Psoas muscle (tissue), 8 donors: ENCODE measurements at regions of chr4 and their contacts with region 1.

Region 1: DNA sequence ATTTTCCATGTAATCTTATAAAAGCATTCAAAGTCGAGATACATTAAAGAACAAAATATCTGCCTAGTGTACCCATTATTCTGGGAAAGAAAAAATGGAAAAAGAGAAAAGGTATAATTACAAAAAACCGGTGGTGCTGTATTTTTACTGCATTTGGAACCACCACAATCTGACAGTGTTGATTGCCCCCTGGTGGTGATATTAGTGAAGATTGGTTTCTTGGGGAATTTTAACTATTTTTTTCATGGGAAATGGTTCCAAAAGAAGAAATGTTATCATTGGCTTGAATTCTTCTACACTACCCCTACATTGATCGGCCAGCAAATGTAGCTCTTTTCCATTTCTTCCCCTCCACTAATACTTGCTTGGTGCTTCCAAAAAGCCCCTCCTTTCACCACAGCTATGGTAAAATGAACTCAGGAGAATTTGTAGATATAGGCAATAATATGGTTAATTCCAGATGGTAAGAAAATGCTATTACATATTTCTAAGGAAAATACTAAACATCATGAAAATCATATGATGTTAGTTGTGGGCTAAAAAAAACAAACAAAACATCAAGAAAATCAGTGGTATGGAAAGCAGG is 50.0 kb downstream of the COX18 start:
- DNase-seq: no peak
- ATAC-seq: no peak
- H3K4me3 ChIP-seq: no peak overlapping the region
- H3K27ac ChIP-seq: no peak overlapping the region
- H3K4me1 ChIP-seq: no peaks in the 10 kb centered on the region
- H3K27me3 ChIP-seq: peaks cover 0 to under 1% (median 0%) of the 10 kb centered on the region in 3 donors
- CTCF ChIP-seq: peak; percentile 62

Region 2: GRCh38 chr4:72326692-72327632 is 692.6 kb before region 1 on chr4:
- intact Hi-C with region 1: loop called in 1 of 2 experiments (anchors 10 kb)
- DNase-seq: no peak
- ATAC-seq: no peak
- H3K4me3 ChIP-seq: no peak overlapping the region
- H3K27ac ChIP-seq: no peak overlapping the region
- H3K4me1 ChIP-seq: no peaks in the 10 kb centered on the region
- H3K27me3 ChIP-seq: peaks cover 0 to 2% (median 0%) of the 10 kb centered on the region in 3 donors
- CTCF ChIP-seq: peak; percentile 56

Region 3: GRCh38 chr4:72505314-72505744 is 514.2 kb before region 1 on chr4:
- intact Hi-C with region 1: loop called (anchors 10 kb)
- DNase-seq: no peak
- ATAC-seq: peak in 3 of 4 donors; percentile 32 to 61 (median 53)
- H3K4me3 ChIP-seq: no peak overlapping the region
- H3K27ac ChIP-seq: no peak overlapping the region
- H3K4me1 ChIP-seq: no peaks in the 10 kb centered on the region
- H3K27me3 ChIP-seq: no peaks in the 10 kb centered on the region
- CTCF ChIP-seq: peak; percentile 43

Region 4: GRCh38 chr4:72701987-72702819 is 317.4 kb before region 1 on chr4:
- intact Hi-C with region 1: loop called in 1 of 2 experiments (anchors 5 kb)
- DNase-seq: no peak
- ATAC-seq: peak in 2 of 4 donors; percentile 43 to 52
- H3K4me3 ChIP-seq: peak overlapping the region; percentile 58
- H3K27ac ChIP-seq: no peak overlapping the region
- H3K4me1 ChIP-seq: no peaks in the 10 kb centered on the region
- H3K27me3 ChIP-seq: no peaks in the 10 kb centered on the region
- CTCF ChIP-seq: peak; percentile 60

Region 5: DNA sequence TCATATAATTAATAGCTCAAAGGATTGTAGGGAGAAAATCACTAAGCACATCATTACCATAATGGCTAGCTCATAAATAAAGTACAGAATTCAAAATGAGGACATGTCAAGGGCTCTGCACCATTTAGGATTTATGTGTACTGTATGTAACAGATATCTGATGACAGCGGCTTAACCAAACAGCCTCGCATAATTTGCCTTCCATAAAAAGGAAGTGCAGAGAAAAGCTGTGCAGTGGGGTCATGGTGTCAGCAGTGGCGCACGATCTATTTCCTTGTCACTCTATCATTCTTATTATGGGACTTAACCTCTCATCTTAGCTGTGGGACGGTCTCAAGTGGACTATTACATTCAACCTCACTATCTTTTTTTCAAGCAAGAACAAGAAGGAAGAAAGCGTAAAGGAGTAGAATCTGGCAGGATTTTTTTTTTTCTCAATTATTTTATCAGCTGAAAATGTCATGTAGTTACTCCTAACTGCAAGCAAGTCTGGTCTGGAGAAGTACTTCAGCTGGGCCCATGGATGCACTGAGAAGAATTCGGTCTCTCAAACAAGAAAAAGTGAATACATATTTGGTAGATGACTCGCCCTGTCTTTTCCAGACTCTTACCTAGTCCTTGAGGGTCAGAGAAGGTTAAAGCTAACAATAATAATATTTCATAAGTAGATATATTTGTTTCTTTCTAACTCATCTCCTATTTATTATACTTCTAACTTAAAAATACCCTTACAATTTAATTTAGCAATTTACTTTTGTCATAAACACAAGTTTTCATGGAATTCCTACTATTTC is 44.7 kb before region 1 on chr4:
- intact Hi-C with region 1: no loop called
- DNase-seq: no peak
- ATAC-seq: no peak
- H3K4me3 ChIP-seq: no peak overlapping the region
- H3K27ac ChIP-seq: no peak overlapping the region
- H3K4me1 ChIP-seq: no peaks in the 10 kb centered on the region
- H3K27me3 ChIP-seq: no peaks in the 10 kb centered on the region
- CTCF ChIP-seq: no peak

Region 6: GRCh38 chr4:73080789-73081188 is 61.2 kb after region 1 on chr4:
- intact Hi-C with region 1: no loop called
- DNase-seq: no peak
- ATAC-seq: peak in 3 of 4 donors; percentile 38 to 62 (median 43)
- H3K4me3 ChIP-seq: no peak overlapping the region
- H3K27ac ChIP-seq: no peak overlapping the region
- H3K4me1 ChIP-seq: peaks cover 2% of the 10 kb centered on the region
- H3K27me3 ChIP-seq: no peaks in the 10 kb centered on the region
- CTCF ChIP-seq: no peak